ENCODE measurements at regions of chr18 and their contacts with region 1.

Region 1: GRCh38 chr18:69208545-69208944 is 192.1 kb upstream of the DOK6 start:
- DNase-seq: no peak
- ATAC-seq: no peak
- H3K4me3 ChIP-seq: no peak overlapping the region
- H3K27ac ChIP-seq: no peak overlapping the region
- H3K4me1 ChIP-seq: no peaks in the 10 kb centered on the region
- H3K27me3 ChIP-seq: no peaks in the 10 kb centered on the region
- CTCF ChIP-seq: no peak
- POLR2A ChIP-seq: no peak
- RAD21 ChIP-seq: no peak

Region 2: GRCh38 chr18:69172046-69172445 is 36.5 kb before region 1 on chr18:
- CTCF ChIA-PET with region 1: no interaction called
- POLR2A ChIA-PET with region 1: no interaction called
- dilution Hi-C with region 1: no loop called
- in situ Hi-C with region 1: no loop called
- intact Hi-C with region 1: loop called (anchors 1 kb)
- DNase-seq: peak; percentile 10
- ATAC-seq: peak; percentile 37; the same call in 1 of the 2 replicates
- H3K4me3 ChIP-seq: no peak overlapping the region
- H3K27ac ChIP-seq: no peak overlapping the region
- H3K4me1 ChIP-seq: no peaks in the 10 kb centered on the region
- H3K27me3 ChIP-seq: no peaks in the 10 kb centered on the region
- CTCF ChIP-seq: no peak
- POLR2A ChIP-seq: no peak
- RAD21 ChIP-seq: no peak

Region 3: GRCh38 chr18:69387186-69387585 is 178.6 kb after region 1 on chr18:
- CTCF ChIA-PET with region 1: no interaction called
- POLR2A ChIA-PET with region 1: no interaction called
- dilution Hi-C with region 1: no loop called
- in situ Hi-C with region 1: no loop called
- intact Hi-C with region 1: loop called (anchors 5 kb)
- DNase-seq: no peak
- ATAC-seq: no peak
- H3K4me3 ChIP-seq: no peak overlapping the region
- H3K27ac ChIP-seq: no peak overlapping the region
- H3K4me1 ChIP-seq: no peaks in the 10 kb centered on the region
- H3K27me3 ChIP-seq: no peaks in the 10 kb centered on the region
- CTCF ChIP-seq: no peak
- POLR2A ChIP-seq: no peak
- RAD21 ChIP-seq: no peak

Measured in IMR-90 (cell line).